Right ventricle myocardium inferior (tissue), 1 donor: ENCODE measurements at regions of chr12 and their contacts with region 1.

Region 1: DNA sequence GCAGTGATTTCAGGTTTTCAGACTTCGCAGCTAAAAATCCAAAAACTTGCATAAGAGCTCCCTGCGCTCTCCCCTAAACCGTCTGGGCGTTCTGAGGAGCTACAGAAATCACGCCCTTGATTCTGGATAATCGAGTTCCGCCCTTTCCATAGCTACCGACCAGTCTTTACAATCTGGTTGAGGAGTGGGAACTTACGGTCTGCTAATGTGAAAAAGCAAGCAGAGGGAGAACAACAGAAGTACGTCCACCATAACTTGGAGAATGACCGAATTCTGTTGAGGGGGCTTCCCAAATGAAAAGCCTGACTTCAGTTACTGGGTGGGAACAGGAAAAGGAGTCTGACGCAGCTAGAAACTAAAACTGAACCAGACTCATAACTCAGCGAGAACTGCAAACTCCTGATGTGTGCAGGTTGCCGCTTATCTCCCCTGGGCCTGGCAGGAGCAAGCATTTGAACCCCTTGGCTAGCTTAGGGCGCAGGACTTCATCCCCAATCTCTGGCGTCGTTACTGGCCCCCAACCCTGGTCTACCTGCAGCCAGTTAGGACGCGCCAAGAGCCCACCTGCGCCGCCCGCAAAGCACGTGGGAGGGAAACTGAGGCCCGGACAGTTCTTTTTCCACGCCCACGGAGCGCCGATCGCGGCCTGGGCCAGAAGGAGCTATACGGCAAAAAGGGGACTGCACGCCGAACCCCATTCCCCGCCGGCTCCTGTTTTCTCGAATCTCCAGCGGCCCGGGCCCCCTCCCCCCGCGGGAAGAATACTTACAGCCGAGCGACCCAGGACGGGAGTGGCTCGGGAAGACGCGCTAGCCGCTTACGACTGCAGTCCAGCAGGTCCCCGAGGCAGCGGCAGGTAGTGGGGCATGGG is 838 bp downstream of the LRIG3 start:
- DNase-seq: no peak
- ATAC-seq: peak; percentile 16

Region 2: GRCh38 chr12:58757422-58757821 is 162.0 kb before region 1 on chr12:
- intact Hi-C with region 1: no loop called
- DNase-seq: no peak
- ATAC-seq: no peak

Region 3: DNA sequence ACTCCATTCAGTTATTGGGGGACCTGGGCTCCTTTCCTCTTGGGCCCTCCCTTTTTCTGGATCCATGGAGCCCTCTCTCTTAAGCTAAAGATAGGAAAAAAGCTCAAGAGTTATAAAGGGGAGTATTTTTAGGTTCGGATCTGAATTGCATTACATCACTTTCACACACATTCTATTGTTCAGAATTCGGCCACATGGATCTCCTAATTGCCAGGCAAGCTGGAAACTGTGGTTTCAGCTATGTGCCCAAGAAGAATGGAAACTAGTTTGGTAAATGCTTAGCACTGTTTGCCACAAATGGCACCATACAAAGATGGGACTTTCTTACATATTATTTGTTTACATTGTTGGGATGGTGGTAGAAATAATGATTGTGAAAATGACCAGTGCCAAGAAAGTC is 144.7 kb before region 1 on chr12:
- intact Hi-C with region 1: loop called (anchors 5 kb)
- DNase-seq: no peak
- ATAC-seq: no peak